Transverse colon (tissue), 4 donors: ENCODE measurements at regions of chr6 and their contacts with region 1.

Region 1: DNA sequence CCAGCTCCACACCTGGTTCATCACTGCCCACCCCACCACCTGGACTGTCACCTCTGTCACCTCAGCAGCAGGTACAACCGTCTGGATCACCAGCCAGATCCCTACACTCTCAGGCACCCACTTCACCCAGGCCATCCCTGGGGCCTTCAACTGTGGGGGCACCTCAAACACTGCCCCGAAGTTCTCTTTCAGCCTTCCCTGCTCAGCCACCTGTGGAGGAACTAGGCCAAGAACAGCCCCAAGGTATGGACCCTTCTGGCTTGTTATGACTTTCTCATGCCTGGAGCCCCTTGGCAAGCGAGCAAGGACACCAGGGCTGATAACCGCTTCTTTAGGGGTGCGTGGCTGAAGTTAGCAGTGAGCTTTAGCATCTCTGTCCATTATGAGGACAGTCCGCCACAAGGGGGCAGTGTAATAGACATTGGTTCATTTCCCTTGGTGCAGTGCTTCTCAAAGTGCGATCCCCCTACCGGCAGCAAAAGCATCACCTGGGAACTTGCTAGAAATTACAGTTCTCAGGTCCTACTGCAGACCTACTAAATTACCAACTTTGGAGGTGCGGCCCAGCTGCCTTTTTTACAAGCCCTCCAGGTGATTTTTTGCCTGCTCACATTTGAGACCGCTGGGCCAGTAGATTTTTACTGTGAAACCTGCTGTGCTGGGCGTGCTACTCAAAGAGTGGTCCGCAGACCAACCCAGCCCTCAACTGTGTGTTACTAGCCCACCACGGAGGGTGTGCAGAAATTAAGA is 32.5 kb downstream of the PNPLA1 start:
- DNase-seq: peak; percentile 94
- H3K4me3 ChIP-seq: no peak overlapping the region
- H3K27ac ChIP-seq: no peak overlapping the region
- H3K4me1 ChIP-seq: peaks cover 0 to 8% (median 0%) of the 10 kb centered on the region in 4 donors
- H3K27me3 ChIP-seq: no peaks in the 10 kb centered on the region
- CTCF ChIP-seq: peak; percentile 90 to 98 (median 97)
- EP300 ChIP-seq: no peak
- POLR2A ChIP-seq: no peak

Region 2: DNA sequence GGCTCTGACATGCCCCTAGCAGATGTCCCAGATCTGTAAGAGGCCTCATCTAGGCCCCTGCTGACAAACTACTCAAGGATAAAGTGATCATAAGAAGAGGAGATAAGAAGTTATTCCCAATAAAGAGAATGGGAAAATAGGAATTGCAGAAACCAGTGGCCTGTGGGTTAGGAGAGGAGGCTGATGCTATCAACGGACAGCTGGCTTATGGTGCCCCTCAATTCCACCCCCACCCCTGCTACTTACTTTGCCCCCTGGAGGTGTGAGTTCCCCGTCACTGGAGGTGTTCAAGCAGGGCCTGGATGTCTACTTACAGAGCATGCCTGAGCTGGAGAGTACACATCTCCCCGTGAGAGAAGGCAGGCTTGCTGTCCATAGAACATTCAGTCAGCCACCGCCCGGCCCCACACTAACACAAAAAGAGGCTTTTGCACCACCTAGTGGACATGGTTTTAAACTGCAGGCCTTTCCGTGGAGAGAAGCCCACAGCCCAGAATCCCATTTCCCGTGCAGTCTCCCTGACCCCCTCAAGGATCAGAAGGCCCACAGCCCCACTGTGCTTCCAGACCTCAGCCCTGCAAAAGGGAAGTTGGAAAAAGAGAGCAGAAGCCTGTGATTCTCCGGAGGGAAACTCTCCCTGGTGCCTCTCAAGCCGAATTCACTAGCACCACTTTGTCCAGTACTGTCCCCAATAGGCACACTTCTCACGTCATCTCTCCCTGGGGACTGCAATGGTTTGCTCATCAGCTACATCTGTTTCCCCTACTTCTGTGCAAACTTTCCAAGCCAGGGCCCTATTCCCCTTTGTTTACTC is 58.0 kb after region 1 on chr6:
- in situ Hi-C with region 1: loop called in 1 of 4 experiments (anchors 10 kb)
- intact Hi-C with region 1: loop called (anchors 2 kb)
- DNase-seq: peak; percentile 80
- H3K4me3 ChIP-seq: no peak overlapping the region
- H3K27ac ChIP-seq: no peak overlapping the region
- H3K4me1 ChIP-seq: peaks cover 0 to 17% (median 3%) of the 10 kb centered on the region in 4 donors
- H3K27me3 ChIP-seq: no peaks in the 10 kb centered on the region
- CTCF ChIP-seq: peak; percentile 80 to 92 (median 85)
- EP300 ChIP-seq: no peak
- POLR2A ChIP-seq: no peak